Caco-2 (cell line): ENCODE measurements at regions of chr10 and their contacts with region 1.

Region 1: DNA sequence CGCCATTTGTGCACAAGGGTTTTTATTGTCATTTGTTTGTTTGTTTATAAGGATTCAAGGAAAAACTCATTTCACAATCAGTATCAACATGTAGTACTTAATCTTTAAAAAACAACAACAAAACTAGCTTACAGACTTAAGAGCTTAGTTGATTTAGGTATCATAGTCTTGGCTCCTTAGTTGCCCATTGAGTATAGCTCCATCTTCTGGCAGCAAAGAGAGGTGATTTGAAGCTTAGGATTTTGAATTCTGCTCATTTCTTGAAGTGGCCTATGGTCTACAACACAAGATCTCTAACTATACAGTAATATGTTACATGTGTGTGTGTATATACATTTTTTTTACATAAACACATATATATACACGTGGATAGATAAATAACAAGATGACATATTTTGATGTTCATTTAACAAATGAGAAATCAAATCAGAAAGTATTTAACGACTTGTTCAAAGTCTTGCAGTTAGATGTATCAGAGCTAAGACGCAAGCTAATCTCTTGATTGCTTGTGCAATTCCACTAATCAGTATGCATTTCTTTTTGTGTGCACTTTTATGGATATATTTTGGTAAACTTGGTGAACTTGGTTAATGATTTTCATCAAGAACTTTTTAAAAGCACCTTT is 307.3 kb downstream of the CAMK1D start:
- DNase-seq: peak in 1 of 2 experiments; percentile 49
- H3K4me3 ChIP-seq: no peak overlapping the region
- H3K4me3 Mint-ChIP-seq: no peak overlapping the region
- H3K27ac Mint-ChIP-seq: no peak overlapping the region
- H3K4me1 ChIP-seq: no peaks in the 10 kb centered on the region
- H3K4me1 Mint-ChIP-seq: no peaks in the 10 kb centered on the region
- H3K27me3 ChIP-seq: no peaks in the 10 kb centered on the region
- H3K27me3 Mint-ChIP-seq: no peaks in the 10 kb centered on the region
- CTCF ChIP-seq: peak; percentile 75 to 84

Region 2: GRCh38 chr10:12252882-12253546 is 403.6 kb before region 1 on chr10:
- CTCF ChIA-PET with region 1: interaction called, 4 read pairs
- POLR2A ChIA-PET with region 1: no interaction called
- intact Hi-C with region 1: loop called (anchors 1 kb)
- DNase-seq: peak; percentile 56 to 58
- H3K4me3 ChIP-seq: no peak overlapping the region
- H3K4me3 Mint-ChIP-seq: no peak overlapping the region
- H3K27ac Mint-ChIP-seq: no peak overlapping the region
- H3K4me1 ChIP-seq: 0 out of 2 replicates have a peak, but pooled peaks cover 3% of the 10 kb centered on the region
- H3K4me1 Mint-ChIP-seq: no peaks in the 10 kb centered on the region
- H3K27me3 ChIP-seq: no peaks in the 10 kb centered on the region
- H3K27me3 Mint-ChIP-seq: no peaks in the 10 kb centered on the region
- CTCF ChIP-seq: peak; percentile 64 to 82

Region 3: GRCh38 chr10:12638103-12638502 is 18.5 kb before region 1 on chr10:
- CTCF ChIA-PET with region 1: interaction called, 12 read pairs
- POLR2A ChIA-PET with region 1: no interaction called
- intact Hi-C with region 1: no loop called
- DNase-seq: peak; percentile 75 to 85
- H3K4me3 ChIP-seq: no peak overlapping the region
- H3K4me3 Mint-ChIP-seq: no peak overlapping the region
- H3K27ac Mint-ChIP-seq: no peak overlapping the region
- H3K4me1 ChIP-seq: peaks cover 12% of the 10 kb centered on the region
- H3K4me1 Mint-ChIP-seq: peaks cover 19% of the 10 kb centered on the region
- H3K27me3 ChIP-seq: no peaks in the 10 kb centered on the region
- H3K27me3 Mint-ChIP-seq: no peaks in the 10 kb centered on the region
- CTCF ChIP-seq: no peak

Region 4: GRCh38 chr10:12690525-12691126 is 34.0 kb after region 1 on chr10:
- CTCF ChIA-PET with region 1: no interaction called
- POLR2A ChIA-PET with region 1: no interaction called
- intact Hi-C with region 1: no loop called
- DNase-seq: no peak
- H3K4me3 ChIP-seq: no peak overlapping the region
- H3K4me3 Mint-ChIP-seq: no peak overlapping the region
- H3K27ac Mint-ChIP-seq: no peak overlapping the region
- H3K4me1 ChIP-seq: peaks cover 9% of the 10 kb centered on the region; the same call in 1 of the 2 replicates
- H3K4me1 Mint-ChIP-seq: peaks cover 7% of the 10 kb centered on the region
- H3K27me3 ChIP-seq: no peaks in the 10 kb centered on the region
- H3K27me3 Mint-ChIP-seq: no peaks in the 10 kb centered on the region
- CTCF ChIP-seq: no peak